Aorta (tissue), 5 donors: ENCODE measurements at regions of chr1 and their contacts with region 1.

Region 1: GRCh38 chr1:44786138-44786840 is 1.7 kb downstream of the BEST4 start:
- DNase-seq: peak; percentile 81 to 89
- ATAC-seq: peak; percentile 79
- H3K4me3 ChIP-seq: peak overlapping the region in 1 of 2 donors; percentile 23
- H3K27ac ChIP-seq: peak overlapping the region in 1 of 2 donors; percentile 74
- H3K4me1 ChIP-seq: no peaks in the 10 kb centered on the region
- H3K27me3 ChIP-seq: no peaks in the 10 kb centered on the region

Region 2: DNA sequence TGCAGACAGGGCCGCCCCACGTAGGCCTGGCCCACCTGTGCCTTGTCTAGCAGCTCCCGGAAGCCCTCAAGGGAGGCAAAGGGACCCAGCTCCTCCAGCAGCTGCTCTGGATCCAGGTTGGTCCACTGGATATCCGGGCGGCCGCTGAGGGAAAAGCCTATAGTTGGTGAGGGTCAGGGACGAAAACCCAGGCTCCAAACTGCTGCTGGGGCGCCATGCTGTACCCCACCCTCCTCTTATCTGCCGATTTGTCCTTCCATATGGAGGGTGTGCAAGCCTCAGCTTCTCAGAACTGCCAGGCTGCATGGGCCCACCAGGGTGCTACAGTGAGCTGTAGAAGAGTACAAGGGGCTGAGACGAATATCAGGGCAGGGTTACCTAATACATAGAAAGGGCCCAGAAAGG is 44.6 kb after region 1 on chr1:
- intact Hi-C with region 1: loop called (anchors 5 to 10 kb)
- DNase-seq: no peak
- ATAC-seq: no peak
- H3K4me3 ChIP-seq: no peak overlapping the region
- H3K27ac ChIP-seq: no peak overlapping the region
- H3K4me1 ChIP-seq: no peaks in the 10 kb centered on the region
- H3K27me3 ChIP-seq: no peaks in the 10 kb centered on the region

Region 3: GRCh38 chr1:44835738-44836675 is 49.7 kb after region 1 on chr1:
- intact Hi-C with region 1: loop called (anchors 5 to 10 kb)
- DNase-seq: peak; percentile 93 to 96
- ATAC-seq: peak; percentile 86
- H3K4me3 ChIP-seq: no peak overlapping the region
- H3K27ac ChIP-seq: no peak overlapping the region
- H3K4me1 ChIP-seq: no peaks in the 10 kb centered on the region
- H3K27me3 ChIP-seq: no peaks in the 10 kb centered on the region